Activated naive CD4-positive, alpha-beta T cell treated with anti-CD3 and anti-CD28 coated beads for 36 hours (primary cell): ENCODE measurements at regions of chr6 and their contacts with region 1.

Region 1: DNA sequence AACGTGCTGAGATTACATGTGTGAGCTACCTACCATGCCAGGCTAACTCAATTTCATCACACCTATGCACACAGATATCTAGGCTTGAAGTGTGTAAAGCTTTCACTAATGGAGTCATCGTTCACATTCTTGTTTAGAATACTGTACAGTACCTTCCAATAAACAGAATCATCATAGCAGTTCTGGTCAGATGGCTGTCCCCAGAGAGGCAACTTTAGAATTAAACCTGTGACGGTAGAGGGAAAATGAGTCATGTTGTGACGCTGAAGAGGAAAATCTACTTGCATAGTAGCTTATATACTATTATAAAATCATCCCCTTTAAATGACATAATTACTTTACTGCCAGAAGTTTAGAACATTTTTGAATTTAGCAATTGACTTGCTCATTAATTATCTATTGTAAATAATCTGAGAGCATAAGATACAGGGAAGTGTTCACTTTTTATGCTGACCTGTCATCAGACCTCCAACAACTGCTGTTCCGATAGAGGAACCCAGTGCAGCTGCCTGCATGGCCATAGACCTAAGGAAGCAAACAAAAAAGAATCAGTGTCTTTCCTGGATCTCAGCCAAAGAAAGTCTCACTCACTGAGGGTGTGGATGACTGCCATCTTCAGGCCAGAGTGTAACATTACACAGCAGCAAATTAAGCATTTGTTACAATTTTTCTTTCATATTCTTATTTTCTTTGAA is 29.8 kb downstream of the RHAG start:
- DNase-seq: peak; percentile 26
- H3K4me3 Mint-ChIP-seq: no peak overlapping the region
- H3K27ac Mint-ChIP-seq: no peak overlapping the region
- H3K4me1 Mint-ChIP-seq: no peaks in the 10 kb centered on the region
- H3K27me3 Mint-ChIP-seq: peaks cover 10% of the 10 kb centered on the region

Region 2: GRCh38 chr6:49542003-49542402 is 64.8 kb before region 1 on chr6:
- CTCF ChIA-PET with region 1: interaction called, 14 read pairs
- intact Hi-C with region 1: no loop called
- DNase-seq: no peak
- H3K4me3 Mint-ChIP-seq: no peak overlapping the region
- H3K27ac Mint-ChIP-seq: no peak overlapping the region
- H3K4me1 Mint-ChIP-seq: peaks cover 4% of the 10 kb centered on the region
- H3K27me3 Mint-ChIP-seq: peaks cover 6% of the 10 kb centered on the region

Region 3: DNA sequence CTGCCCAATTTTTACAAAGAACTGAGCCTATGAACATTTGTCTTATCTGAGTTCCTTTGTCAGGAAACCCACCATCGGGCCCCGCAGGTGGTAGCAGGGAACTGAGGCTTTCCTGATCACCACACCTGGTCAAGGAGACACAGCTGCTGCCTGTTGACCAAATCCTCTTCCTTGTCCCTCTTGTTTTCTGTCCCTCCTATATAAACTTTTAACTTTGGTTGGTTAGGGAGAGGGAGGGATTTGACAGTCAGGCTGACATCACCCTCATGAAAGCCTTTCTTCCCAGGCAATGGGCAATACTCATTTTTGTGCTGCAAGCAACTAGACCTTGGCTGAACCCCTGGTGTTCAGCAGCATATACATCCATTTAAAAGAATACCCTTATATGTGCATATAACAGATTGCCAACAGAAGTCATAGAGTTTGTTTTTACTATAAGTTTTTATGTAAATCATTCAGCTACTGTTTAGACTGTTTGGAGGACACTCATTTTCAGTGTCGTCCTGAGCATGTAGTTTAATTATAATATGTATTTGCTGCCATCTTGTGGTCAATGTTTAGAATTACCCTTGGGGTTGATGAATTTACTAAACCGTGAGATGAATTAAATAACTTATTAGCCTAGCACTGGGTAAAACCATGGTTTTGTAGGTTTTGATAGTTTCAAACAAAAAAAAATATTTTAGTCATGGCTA is 242.5 kb after region 1 on chr6:
- CTCF ChIA-PET with region 1: no interaction called
- intact Hi-C with region 1: loop called (anchors 1 kb)
- DNase-seq: no peak
- H3K4me3 Mint-ChIP-seq: no peak overlapping the region
- H3K27ac Mint-ChIP-seq: no peak overlapping the region
- H3K4me1 Mint-ChIP-seq: no peaks in the 10 kb centered on the region
- H3K27me3 Mint-ChIP-seq: peaks cover 2% of the 10 kb centered on the region